ENCODE measurements at regions of chr4 and their contacts with region 1.

Region 1: DNA sequence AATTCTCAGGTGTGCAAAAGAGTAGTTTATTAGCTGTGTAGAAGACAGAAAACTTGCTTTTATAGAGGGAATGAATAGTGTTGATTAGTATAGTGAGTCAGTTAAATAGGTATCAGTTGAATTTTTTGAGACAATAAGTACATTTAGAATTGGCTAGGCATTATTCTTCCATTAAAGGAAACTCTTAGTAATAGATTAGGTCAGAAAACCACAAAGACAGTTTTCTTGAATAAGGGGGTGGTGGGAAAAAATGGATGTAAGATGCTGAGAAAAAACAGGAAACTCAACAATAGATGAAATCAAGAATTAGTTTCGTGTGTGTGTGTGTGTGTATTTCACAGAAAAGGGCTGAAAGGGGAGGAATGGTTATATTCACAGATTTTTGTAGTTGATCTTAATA is 16.8 kb downstream of the CD38 start:
- DNase-seq: no peak
- ATAC-seq: peak; percentile 84
- H3K4me3 Mint-ChIP-seq: peak overlapping the region; percentile 47
- H3K27ac Mint-ChIP-seq: peak overlapping the region; percentile 58
- H3K4me1 Mint-ChIP-seq: peaks cover 46% of the 10 kb centered on the region
- H3K27me3 Mint-ChIP-seq: no peaks in the 10 kb centered on the region

Region 2: GRCh38 chr4:15303052-15303641 is 491.8 kb before region 1 on chr4:
- CTCF ChIA-PET with region 1: no interaction called
- POLR2A ChIA-PET with region 1: no interaction called
- intact Hi-C with region 1: no loop called
- DNase-seq: no peak
- ATAC-seq: no peak
- H3K4me3 Mint-ChIP-seq: no peak overlapping the region
- H3K27ac Mint-ChIP-seq: no peak overlapping the region
- H3K4me1 Mint-ChIP-seq: no peaks in the 10 kb centered on the region
- H3K27me3 Mint-ChIP-seq: peaks cover 3% of the 10 kb centered on the region

Region 3: GRCh38 chr4:15738877-15739276 is 56.0 kb before region 1 on chr4:
- CTCF ChIA-PET with region 1: interaction called, 3 read pairs
- POLR2A ChIA-PET with region 1: no interaction called
- intact Hi-C with region 1: loop called in 1 of 2 experiments (anchors 2 kb)
- DNase-seq: peak; percentile 16
- ATAC-seq: peak; percentile 85
- H3K4me3 Mint-ChIP-seq: no peak overlapping the region
- H3K27ac Mint-ChIP-seq: peak overlapping the region; percentile 58
- H3K4me1 Mint-ChIP-seq: peaks cover 40% of the 10 kb centered on the region
- H3K27me3 Mint-ChIP-seq: no peaks in the 10 kb centered on the region

Region 4: GRCh38 chr4:15771216-15772058 is 23.5 kb before region 1 on chr4:
- CTCF ChIA-PET with region 1: no interaction called
- POLR2A ChIA-PET with region 1: no interaction called
- intact Hi-C with region 1: loop called in 1 of 2 experiments (anchors 1 kb)
- DNase-seq: peak; percentile 50
- ATAC-seq: peak; percentile 90
- H3K4me3 Mint-ChIP-seq: peak overlapping the region; percentile 22
- H3K27ac Mint-ChIP-seq: peak overlapping the region; percentile 83
- H3K4me1 Mint-ChIP-seq: peaks cover 67% of the 10 kb centered on the region
- H3K27me3 Mint-ChIP-seq: peaks cover 31% of the 10 kb centered on the region

Region 5: DNA sequence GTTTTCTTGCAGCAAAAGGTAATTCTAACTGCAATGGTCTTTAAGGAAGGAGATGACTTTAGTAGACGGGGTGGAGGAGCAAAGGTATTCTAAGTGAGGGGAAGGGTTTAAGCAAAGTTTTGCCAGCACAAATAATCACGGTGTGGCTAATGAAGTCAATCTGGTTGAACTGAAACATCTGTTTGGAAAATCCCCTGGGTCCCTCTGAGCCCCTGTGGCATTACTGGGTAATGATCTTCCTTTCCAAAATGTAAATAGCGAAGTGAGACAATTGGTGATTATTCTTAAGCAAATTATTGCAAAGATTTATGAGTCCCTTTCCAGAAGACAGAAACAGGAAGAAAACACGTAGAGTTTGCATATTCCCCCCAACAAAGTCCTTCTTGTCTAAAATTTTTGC is 96.4 kb after region 1 on chr4:
- CTCF ChIA-PET with region 1: no interaction called
- POLR2A ChIA-PET with region 1: no interaction called
- intact Hi-C with region 1: no loop called
- DNase-seq: no peak
- ATAC-seq: no peak
- H3K4me3 Mint-ChIP-seq: no peak overlapping the region
- H3K27ac Mint-ChIP-seq: no peak overlapping the region
- H3K4me1 Mint-ChIP-seq: peaks cover 3% of the 10 kb centered on the region
- H3K27me3 Mint-ChIP-seq: peaks cover 8% of the 10 kb centered on the region

Region 6: DNA sequence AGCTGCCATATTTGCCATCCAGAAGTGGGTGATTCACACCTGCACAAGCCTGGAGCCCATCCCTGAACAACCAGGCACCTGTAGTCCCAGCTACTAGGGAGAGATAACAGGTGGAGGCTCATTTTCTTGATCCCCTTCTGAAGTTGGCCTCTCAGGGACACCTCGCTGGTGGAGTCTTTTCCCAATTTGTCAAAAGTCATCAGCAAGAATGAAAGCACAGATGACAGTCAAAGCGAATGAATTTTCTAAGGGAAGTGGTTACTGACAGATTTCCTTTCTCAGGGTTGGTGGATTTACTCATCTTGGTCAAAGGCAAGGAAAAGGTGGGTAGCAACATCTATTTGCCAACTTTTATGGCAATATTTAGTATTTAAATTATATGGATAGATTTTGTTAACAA is 107.1 kb after region 1 on chr4:
- CTCF ChIA-PET with region 1: no interaction called
- POLR2A ChIA-PET with region 1: no interaction called
- intact Hi-C with region 1: loop called in 1 of 2 experiments (anchors 2 kb)
- DNase-seq: peak; percentile 30
- ATAC-seq: peak; percentile 77
- H3K4me3 Mint-ChIP-seq: no peak overlapping the region
- H3K27ac Mint-ChIP-seq: no peak overlapping the region
- H3K4me1 Mint-ChIP-seq: peaks cover 15% of the 10 kb centered on the region
- H3K27me3 Mint-ChIP-seq: peaks cover 38% of the 10 kb centered on the region